Mammary epithelial cell (primary cell): ENCODE measurements at regions of chr4 and their contacts with region 1.

Region 1: GRCh38 chr4:39559626-39560025 is 32.4 kb upstream of the UGDH start:
- DNase-seq: no peak
- H3K4me3 ChIP-seq: no peak overlapping the region
- H3K27ac ChIP-seq: no peak overlapping the region
- H3K4me1 ChIP-seq: no peaks in the 10 kb centered on the region
- H3K27me3 ChIP-seq: no peaks in the 10 kb centered on the region
- CTCF ChIP-seq: no peak

Region 2: GRCh38 chr4:39227906-39228305 is 331.7 kb before region 1 on chr4:
- CTCF ChIA-PET with region 1: no interaction called
- dilution Hi-C with region 1: no loop called
- in situ Hi-C with region 1: no loop called
- intact Hi-C with region 1: no loop called
- DNase-seq: no peak
- H3K4me3 ChIP-seq: no peak overlapping the region
- H3K27ac ChIP-seq: no peak overlapping the region
- H3K4me1 ChIP-seq: no peaks in the 10 kb centered on the region
- H3K27me3 ChIP-seq: no peaks in the 10 kb centered on the region
- CTCF ChIP-seq: no peak

Region 3: GRCh38 chr4:39609454-39609931 is 49.9 kb after region 1 on chr4:
- CTCF ChIA-PET with region 1: no interaction called
- dilution Hi-C with region 1: loop called (anchors 5 kb)
- in situ Hi-C with region 1: no loop called
- intact Hi-C with region 1: no loop called
- DNase-seq: peak; percentile 6
- H3K4me3 ChIP-seq: no peak overlapping the region
- H3K27ac ChIP-seq: no peak overlapping the region
- H3K4me1 ChIP-seq: no peaks in the 10 kb centered on the region
- H3K27me3 ChIP-seq: no peaks in the 10 kb centered on the region
- CTCF ChIP-seq: no peak

Region 4: DNA sequence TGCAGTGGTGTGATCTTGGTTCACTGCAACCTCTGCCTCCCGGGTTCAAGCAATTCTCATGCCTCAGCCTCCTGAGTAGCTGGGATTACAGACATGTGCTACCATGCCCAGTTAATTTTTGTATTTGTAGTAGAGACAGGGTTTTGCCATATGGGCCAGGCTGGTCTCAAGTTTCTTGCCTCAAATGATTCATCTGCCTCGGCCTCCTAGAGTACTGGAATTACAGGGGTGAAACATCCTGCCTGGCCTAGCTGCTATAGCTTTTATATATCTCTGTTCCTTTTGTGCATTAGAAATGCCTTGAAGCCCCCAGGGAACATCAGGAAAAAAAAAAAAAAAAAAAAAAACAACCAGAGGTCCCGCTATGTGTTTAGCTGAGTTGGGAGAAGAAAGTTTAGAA is 173.1 kb after region 1 on chr4:
- CTCF ChIA-PET with region 1: no interaction called
- dilution Hi-C with region 1: no loop called
- in situ Hi-C with region 1: no loop called
- intact Hi-C with region 1: no loop called
- DNase-seq: peak; percentile 78
- H3K4me3 ChIP-seq: no peak overlapping the region
- H3K27ac ChIP-seq: peak overlapping the region; percentile 29
- H3K4me1 ChIP-seq: peaks cover 11% of the 10 kb centered on the region
- H3K27me3 ChIP-seq: no peaks in the 10 kb centered on the region
- CTCF ChIP-seq: no peak